CD4-positive, alpha-beta T cell (primary cell): ENCODE measurements at regions of chr18 and their contacts with region 1.

Region 1: DNA sequence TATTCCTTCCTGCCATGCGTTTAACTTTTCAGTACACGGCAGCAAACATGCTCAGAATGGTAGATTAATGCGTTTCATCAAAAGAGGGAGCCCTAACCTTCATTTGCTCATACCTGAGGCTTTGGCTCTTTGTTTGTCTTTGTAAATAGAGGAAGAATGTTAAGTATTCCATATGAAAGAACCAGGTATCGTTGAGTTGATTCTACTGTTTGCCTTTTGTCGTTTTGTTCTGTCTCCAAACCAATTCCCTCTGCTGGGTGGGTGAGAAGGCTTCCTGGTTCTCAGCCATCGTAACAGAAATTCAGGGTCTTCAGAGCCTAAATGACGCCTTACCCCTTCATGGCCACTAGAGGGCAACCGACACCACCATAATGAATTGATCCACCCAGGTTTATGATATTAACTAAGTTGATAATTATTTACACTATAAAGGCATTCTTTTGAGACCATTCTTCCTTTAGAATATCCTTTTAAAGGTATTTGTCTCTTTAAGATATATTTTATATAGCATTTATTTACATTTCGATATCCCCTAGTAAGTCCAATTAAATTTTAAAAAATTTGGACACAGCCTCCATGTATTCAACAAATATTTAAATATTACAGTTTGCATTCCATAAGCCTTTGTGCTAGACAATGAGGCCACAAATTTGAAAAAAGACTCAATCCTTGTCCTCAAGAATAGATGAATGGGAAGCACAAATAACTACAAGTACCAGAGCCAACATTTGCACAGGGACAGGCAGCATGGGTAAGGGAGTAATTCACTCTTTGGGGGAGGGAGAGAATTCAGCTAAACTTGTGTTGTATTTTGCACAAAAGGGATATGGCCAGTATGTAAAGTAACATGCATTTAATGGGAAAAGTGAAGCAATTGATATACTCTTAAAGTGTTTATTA is 48.1 kb downstream of the TIMM21 start:
- DNase-seq: peak in 13 of 14 experiments; percentile 18 to 86 (median 36)
- ATAC-seq: peak; percentile 96
- H3K4me3 ChIP-seq: peak overlapping the region; percentile 50
- H3K4me3 Mint-ChIP-seq: peak overlapping the region; percentile 83
- H3K27ac ChIP-seq: peak overlapping the region in 1 of 2 donors; percentile 27
- H3K27ac Mint-ChIP-seq: peak overlapping the region; percentile 57
- H3K4me1 ChIP-seq: no peaks in the 10 kb centered on the region
- H3K4me1 Mint-ChIP-seq: no peaks in the 10 kb centered on the region
- H3K27me3 ChIP-seq: peaks cover 0 to 2% of the 10 kb centered on the region in 2 experiments
- H3K27me3 Mint-ChIP-seq: peaks cover 13% of the 10 kb centered on the region
- CTCF ChIP-seq: peak; percentile 99

Region 2: DNA sequence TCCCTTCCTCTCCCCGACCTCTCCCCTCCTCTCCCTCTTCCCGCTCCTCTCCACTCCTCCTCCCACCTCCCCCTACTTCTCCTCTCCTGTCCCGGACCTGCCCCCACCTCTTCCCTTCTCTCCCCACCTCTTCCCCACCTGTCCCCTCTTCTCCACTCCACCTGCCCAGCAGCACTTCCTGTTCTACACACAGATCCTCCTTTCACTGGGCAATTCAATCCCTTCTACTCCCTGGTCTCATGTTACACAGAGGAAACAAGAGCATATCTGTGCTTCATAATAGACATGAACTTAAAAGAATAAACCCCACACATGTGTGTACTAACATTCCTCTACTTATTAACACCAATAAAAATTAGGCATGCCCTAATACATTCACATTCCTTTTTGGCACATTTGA is 13.3 kb before region 1 on chr18:
- CTCF ChIA-PET with region 1: no interaction called
- POLR2A ChIA-PET with region 1: no interaction called
- intact Hi-C with region 1: no loop called
- DNase-seq: no peak
- ATAC-seq: no peak
- H3K4me3 ChIP-seq: no peak overlapping the region
- H3K4me3 Mint-ChIP-seq: no peak overlapping the region
- H3K27ac ChIP-seq: no peak overlapping the region
- H3K27ac Mint-ChIP-seq: no peak overlapping the region
- H3K4me1 ChIP-seq: no peaks in the 10 kb centered on the region
- H3K4me1 Mint-ChIP-seq: no peaks in the 10 kb centered on the region
- H3K27me3 ChIP-seq: peaks cover 0 to 6% of the 10 kb centered on the region in 2 experiments
- H3K27me3 Mint-ChIP-seq: peaks cover 14% of the 10 kb centered on the region
- CTCF ChIP-seq: no peak

Region 3: DNA sequence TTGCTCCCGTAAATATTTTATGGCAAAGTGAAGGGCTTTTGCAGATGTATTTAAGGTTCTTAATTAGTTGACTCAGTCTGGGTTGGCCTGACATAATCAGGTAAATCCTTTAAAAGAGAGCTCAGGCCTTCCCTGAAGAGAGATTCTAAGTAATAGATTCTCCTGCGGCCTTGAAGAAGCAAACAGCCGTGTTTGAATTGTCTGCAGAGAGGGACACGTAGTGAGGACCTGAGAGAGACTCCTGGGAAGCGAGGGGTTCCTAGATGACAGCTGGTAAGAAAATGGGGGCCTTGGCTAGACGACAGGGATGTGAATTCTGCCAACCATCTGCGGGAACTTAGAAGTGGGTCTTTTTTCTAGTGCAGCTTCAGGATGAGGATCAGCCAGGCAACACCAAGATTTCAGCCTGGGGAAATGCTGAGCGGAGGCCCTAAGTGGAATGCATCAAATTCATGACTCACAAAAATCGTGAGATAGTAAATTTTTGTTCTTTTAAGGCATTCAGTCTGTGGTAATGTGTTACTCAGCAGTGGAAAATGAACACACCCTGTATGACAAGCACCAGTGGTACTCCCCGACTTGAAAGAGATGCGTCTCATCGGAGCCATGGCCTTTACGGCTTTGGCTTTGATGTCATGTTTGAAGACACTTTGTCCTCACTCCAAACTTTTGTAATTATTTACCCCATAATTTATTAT is 1293.2 kb after region 1 on chr18:
- CTCF ChIA-PET with region 1: no interaction called
- POLR2A ChIA-PET with region 1: no interaction called
- intact Hi-C with region 1: loop called in 1 of 2 experiments (anchors 10 kb)
- DNase-seq: no peak
- ATAC-seq: no peak
- H3K4me3 ChIP-seq: no peak overlapping the region
- H3K4me3 Mint-ChIP-seq: no peak overlapping the region
- H3K27ac ChIP-seq: no peak overlapping the region
- H3K27ac Mint-ChIP-seq: no peak overlapping the region
- H3K4me1 ChIP-seq: no peaks in the 10 kb centered on the region
- H3K4me1 Mint-ChIP-seq: no peaks in the 10 kb centered on the region
- H3K27me3 ChIP-seq: no peaks in the 10 kb centered on the region
- H3K27me3 Mint-ChIP-seq: peaks cover 47% of the 10 kb centered on the region
- CTCF ChIP-seq: no peak